Pancreas (tissue), 10 donors: ENCODE measurements at regions of chr11 and their contacts with region 1.

Region 1: GRCh38 chr11:62169091-62169847 is 20.7 kb upstream of the SCGB1D1 start:
- DNase-seq: no peak
- ATAC-seq: no peak
- H3K4me3 ChIP-seq: no peak overlapping the region
- H3K27ac ChIP-seq: no peak overlapping the region
- H3K4me1 ChIP-seq: no peaks in the 10 kb centered on the region
- H3K27me3 ChIP-seq: no peaks in the 10 kb centered on the region
- CTCF ChIP-seq: no peak

Region 2: GRCh38 chr11:62315431-62315830 is 146.2 kb after region 1 on chr11:
- intact Hi-C with region 1: loop called in 2 of 3 experiments (anchors 10 kb)
- DNase-seq: no peak
- ATAC-seq: no peak
- H3K4me3 ChIP-seq: no peak overlapping the region
- H3K27ac ChIP-seq: no peak overlapping the region
- H3K4me1 ChIP-seq: no peaks in the 10 kb centered on the region
- H3K27me3 ChIP-seq: no peaks in the 10 kb centered on the region
- CTCF ChIP-seq: no peak

Region 3: GRCh38 chr11:62370743-62371440 is 201.6 kb after region 1 on chr11:
- intact Hi-C with region 1: loop called in 1 of 3 experiments (anchors 10 kb)
- DNase-seq: peak in 5 of 6 donors; percentile 17 to 72 (median 41)
- ATAC-seq: peak; percentile 50 to 93 (median 78)
- H3K4me3 ChIP-seq: no peak overlapping the region
- H3K27ac ChIP-seq: peak overlapping the region; percentile 13 to 58 (median 48)
- H3K4me1 ChIP-seq: peaks cover 0 to 8% (median 0%) of the 10 kb centered on the region in 3 donors
- H3K27me3 ChIP-seq: no peaks in the 10 kb centered on the region
- CTCF ChIP-seq: no peak